Panc1 (cell line): ENCODE measurements at regions of chr17 and their contacts with region 1.

Region 1: DNA sequence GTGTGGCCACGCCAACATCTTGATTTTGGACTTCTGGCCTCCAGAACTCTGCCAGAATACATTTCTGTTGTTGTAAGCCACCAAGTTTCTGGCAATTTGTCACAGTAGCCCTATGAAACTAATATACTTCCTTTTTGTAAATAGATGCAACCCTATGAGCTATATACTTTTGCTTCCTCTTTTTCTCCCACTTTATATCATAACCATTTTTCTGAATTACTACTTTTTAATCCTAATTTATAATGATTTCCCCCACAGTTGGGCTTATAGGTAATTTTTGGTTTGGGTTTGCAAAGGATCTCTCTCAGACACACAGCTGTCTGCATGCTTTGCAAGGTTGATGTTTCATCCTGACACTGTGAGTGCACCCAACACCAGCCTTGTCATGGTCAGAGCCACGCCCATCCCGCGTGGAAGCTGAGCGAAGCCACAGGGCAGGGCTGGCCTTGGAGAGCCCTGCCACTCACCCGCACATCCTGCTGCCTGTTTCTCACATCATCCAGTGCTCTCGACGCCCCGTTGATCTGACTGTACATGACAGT is 5.8 kb downstream of the TRIM25 start:
- DNase-seq: no peak
- ATAC-seq: no peak
- H3K4me3 ChIP-seq: no peak overlapping the region
- H3K27ac ChIP-seq: no peak overlapping the region
- H3K4me1 ChIP-seq: peaks cover 10% of the 10 kb centered on the region
- H3K27me3 ChIP-seq: no peaks in the 10 kb centered on the region
- CTCF ChIP-seq: no peak

Region 2: GRCh38 chr17:56762988-56763387 is 145.1 kb before region 1 on chr17:
- CTCF ChIA-PET with region 1: no interaction called
- POLR2A ChIA-PET with region 1: no interaction called
- in situ Hi-C with region 1: no loop called
- intact Hi-C with region 1: no loop called
- DNase-seq: no peak
- ATAC-seq: no peak
- H3K4me3 ChIP-seq: no peak overlapping the region
- H3K27ac ChIP-seq: no peak overlapping the region
- H3K4me1 ChIP-seq: no peaks in the 10 kb centered on the region
- H3K27me3 ChIP-seq: peaks cover 3% of the 10 kb centered on the region; the same call in 1 of the 2 replicates
- CTCF ChIP-seq: no peak

Region 3: GRCh38 chr17:56779898-56780733 is 128.0 kb before region 1 on chr17:
- CTCF ChIA-PET with region 1: no interaction called
- POLR2A ChIA-PET with region 1: no interaction called
- in situ Hi-C with region 1: no loop called
- intact Hi-C with region 1: no loop called
- DNase-seq: no peak
- ATAC-seq: peak; percentile 98
- H3K4me3 ChIP-seq: peak overlapping the region; percentile 24 to 40
- H3K27ac ChIP-seq: no peak overlapping the region
- H3K4me1 ChIP-seq: peaks cover 11% of the 10 kb centered on the region
- H3K27me3 ChIP-seq: no peaks in the 10 kb centered on the region
- CTCF ChIP-seq: peak; percentile 100

Region 4: GRCh38 chr17:56891784-56892183 is 16.3 kb before region 1 on chr17:
- CTCF ChIA-PET with region 1: no interaction called
- POLR2A ChIA-PET with region 1: no interaction called
- in situ Hi-C with region 1: no loop called
- intact Hi-C with region 1: no loop called
- DNase-seq: no peak
- ATAC-seq: no peak
- H3K4me3 ChIP-seq: no peak overlapping the region
- H3K27ac ChIP-seq: no peak overlapping the region
- H3K4me1 ChIP-seq: no peaks in the 10 kb centered on the region
- H3K27me3 ChIP-seq: no peaks in the 10 kb centered on the region
- CTCF ChIP-seq: no peak; the same call in 1 of the 2 replicates

Region 5: GRCh38 chr17:56960596-56961538 is 52.8 kb after region 1 on chr17 and contains the start of gene COIL:
- CTCF ChIA-PET with region 1: no interaction called
- POLR2A ChIA-PET with region 1: interaction called, 11 read pairs
- in situ Hi-C with region 1: no loop called
- intact Hi-C with region 1: no loop called
- DNase-seq: peak; percentile 76
- ATAC-seq: peak; percentile 98
- H3K4me3 ChIP-seq: peak within 1 kb of the TSS; percentile 68 to 72
- H3K27ac ChIP-seq: peak within 1 kb of the TSS; percentile 86
- H3K4me1 ChIP-seq: peaks cover 9% of the 10 kb centered on the region
- H3K27me3 ChIP-seq: no peaks in the 10 kb centered on the region
- CTCF ChIP-seq: peak; percentile 99
- total RNA-seq, gene COIL: 32.9 TPM